Posterior vena cava (tissue), 2 donors: ENCODE measurements at regions of chr19 and their contacts with region 1.

Region 1: GRCh38 chr19:34808566-34808965 is 35.6 kb upstream of the ZNF599 start:
- DNase-seq: no peak

Region 2: DNA sequence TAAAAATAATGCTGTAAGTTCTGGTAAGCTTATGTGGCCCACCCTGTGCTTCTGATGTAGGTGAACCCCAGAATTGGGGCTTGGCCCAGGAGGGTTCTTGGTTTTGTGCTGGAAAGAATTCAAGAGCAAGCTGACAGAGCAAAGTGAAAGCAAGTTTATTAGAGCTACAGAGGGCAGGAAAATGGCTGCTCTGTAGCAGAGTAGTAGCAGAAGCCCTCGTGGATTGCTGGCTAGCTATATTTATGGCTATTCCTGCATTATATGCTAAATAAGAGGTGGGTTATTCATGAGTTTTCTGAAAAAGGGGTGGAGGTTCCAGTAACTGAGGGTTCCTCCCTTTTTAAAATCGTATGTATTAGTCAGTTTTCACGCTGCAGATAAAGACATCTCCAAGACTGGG is 15.0 kb before region 1 on chr19:
- intact Hi-C with region 1: no loop called
- DNase-seq: no peak

Region 3: DNA sequence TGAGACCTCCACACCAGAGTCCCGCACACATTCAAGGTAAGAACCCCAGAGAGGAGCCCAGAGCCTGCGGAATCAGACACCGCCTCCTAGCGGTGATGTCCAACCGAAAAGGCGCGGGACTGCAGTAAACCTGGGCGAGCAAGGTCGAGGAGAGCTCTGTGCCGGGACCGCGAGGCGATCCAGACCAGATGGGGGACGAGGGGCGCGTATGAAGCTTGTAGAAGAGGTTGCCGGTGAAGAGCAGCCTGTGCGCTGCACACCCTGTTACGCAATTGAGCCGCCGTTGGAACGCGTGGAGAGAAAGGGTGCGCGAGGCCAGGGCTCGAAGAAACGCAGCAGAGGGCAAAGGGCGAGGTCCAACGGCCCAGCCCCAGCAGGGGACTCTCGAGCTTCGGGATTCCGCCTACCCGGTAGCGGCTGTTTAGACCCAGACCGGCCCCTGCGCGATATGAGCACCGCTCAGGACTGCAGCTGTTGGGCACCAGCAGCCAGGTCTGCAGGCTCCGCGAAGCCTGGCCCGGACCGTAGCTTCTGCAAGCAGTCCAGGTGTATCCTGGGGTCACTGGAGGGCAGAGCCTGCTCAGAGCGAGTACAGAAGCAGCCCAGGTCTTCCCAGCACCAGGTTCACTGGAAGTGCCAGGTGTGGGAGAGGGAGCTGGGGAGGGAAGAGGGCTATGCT is 30.3 kb after region 1 on chr19:
- intact Hi-C with region 1: loop called in 1 of 2 experiments (anchors 1 kb)
- DNase-seq: peak; percentile 83